Left colon (tissue), 2 donors: ENCODE measurements at regions of chr4 and their contacts with region 1.

Region 1: GRCh38 chr4:112145326-112145819 is at the start of gene FAM241A:
- DNase-seq: peak; percentile 83 to 87
- ATAC-seq: peak; percentile 99
- total RNA-seq, gene FAM241A: 1.6 to 1.8 TPM

Region 2: GRCh38 chr4:112231779-112232713 is 86.7 kb after region 1 on chr4 and contains the start of gene AP1AR:
- intact Hi-C with region 1: loop called in 1 of 2 experiments (anchors 10 kb)
- DNase-seq: peak; percentile 88 to 89
- ATAC-seq: peak; percentile 62
- total RNA-seq, gene AP1AR: 35.2 to 43.8 TPM

Region 3: GRCh38 chr4:112726031-112726430 is 580.7 kb after region 1 on chr4:
- intact Hi-C with region 1: no loop called
- DNase-seq: no peak
- ATAC-seq: no peak